ENCODE measurements at regions of chr1 and their contacts with region 1.

Region 1: GRCh38 chr1:23959041-23959460 is 577 bp upstream of the PNRC2 start:
- DNase-seq: peak; percentile 75 to 96 (median 92)
- ATAC-seq: peak; percentile 80 to 86
- H3K4me3 Mint-ChIP-seq: peak overlapping the region; percentile 95 to 100 (median 100)
- H3K27ac Mint-ChIP-seq: peak overlapping the region; percentile 99 to 100 (median 100)
- H3K4me1 Mint-ChIP-seq: peaks cover 13 to 79% (median 47%) of the 10 kb centered on the region in 4 donors
- H3K27me3 Mint-ChIP-seq: no peaks in the 10 kb centered on the region

Region 2: GRCh38 chr1:23875382-23875781 is 83.7 kb before region 1 on chr1:
- POLR2A ChIA-PET with region 1: no interaction called
- DNase-seq: no peak
- ATAC-seq: no peak
- H3K4me3 Mint-ChIP-seq: no peak overlapping the region
- H3K27ac Mint-ChIP-seq: no peak overlapping the region
- H3K4me1 Mint-ChIP-seq: peaks cover 0 to 1% (median 0%) of the 10 kb centered on the region in 4 donors
- H3K27me3 Mint-ChIP-seq: peaks cover 0 to 1% (median 0%) of the 10 kb centered on the region in 5 donors

Region 3: DNA sequence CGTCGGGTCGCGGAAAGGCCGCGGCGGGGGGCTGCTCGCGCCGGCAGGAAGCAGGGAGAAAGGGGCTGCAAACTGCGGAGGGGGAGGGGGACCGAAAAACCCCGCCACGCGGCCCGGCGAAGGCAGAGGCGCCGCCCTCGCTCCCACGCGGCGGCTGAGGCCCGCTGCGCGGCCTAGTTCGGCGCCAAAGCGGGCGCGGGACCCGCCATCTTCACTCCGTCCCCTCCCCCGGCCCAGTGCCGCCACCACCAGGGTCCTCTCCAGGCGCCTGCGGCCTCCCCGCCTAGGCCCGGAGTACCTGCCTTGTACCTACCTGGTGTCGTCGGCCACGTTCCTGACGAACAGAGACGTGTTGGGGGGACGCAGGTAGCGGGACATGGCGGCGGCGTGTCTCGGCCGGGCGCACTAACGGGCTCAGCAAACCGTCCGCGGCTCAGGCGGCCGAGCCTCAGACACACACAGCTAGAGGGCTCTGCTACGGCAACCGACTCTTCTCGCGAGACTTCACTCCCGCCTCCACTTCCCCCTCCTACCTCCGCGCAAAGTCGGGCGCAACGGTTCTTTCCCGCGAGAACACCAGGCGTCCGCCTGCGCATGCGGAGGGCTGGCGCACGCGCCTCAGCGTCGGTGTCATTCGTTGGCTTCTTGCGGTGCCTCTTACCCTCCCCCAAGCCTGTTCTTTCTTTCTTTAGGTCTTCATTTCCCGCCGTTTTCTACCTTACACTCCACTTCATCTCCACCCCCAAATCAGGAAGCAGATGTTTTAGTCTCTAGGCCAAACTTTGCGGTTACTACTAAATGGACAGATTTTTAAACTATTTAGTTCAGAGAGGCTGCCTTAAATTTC is 21.1 kb after region 1 on chr1 and contains the start of gene SRSF10:
- POLR2A ChIA-PET with region 1: interaction called, 66 read pairs
- DNase-seq: peak; percentile 92 to 99 (median 97)
- ATAC-seq: peak; percentile 94
- H3K4me3 Mint-ChIP-seq: peak within 1 kb of the TSS; percentile 83 to 98 (median 92)
- H3K27ac Mint-ChIP-seq: peak within 1 kb of the TSS; percentile 92 to 98 (median 96)
- H3K4me1 Mint-ChIP-seq: peaks cover 23 to 55% (median 51%) of the 10 kb centered on the region in 4 donors
- H3K27me3 Mint-ChIP-seq: peaks cover 0 to 2% (median 0%) of the 10 kb centered on the region in 5 donors
- polyA plus RNA-seq, gene SRSF10: 98.6 to 125 (median 104) TPM

Measured in naive thymus-derived CD8-positive, alpha-beta T cell (primary cell).